PC-9 (cell line): ENCODE measurements at regions of chr19 and their contacts with region 1.

Region 1: GRCh38 chr19:48530066-48530720 is 18.6 kb upstream of the LMTK3 start:
- DNase-seq: no peak
- H3K4me3 ChIP-seq: no peak overlapping the region
- H3K27ac ChIP-seq: no peak overlapping the region
- H3K4me1 ChIP-seq: no peaks in the 10 kb centered on the region
- H3K27me3 ChIP-seq: no peaks in the 10 kb centered on the region
- CTCF ChIP-seq: no peak

Region 2: GRCh38 chr19:47860602-47861297 is 669.4 kb before region 1 on chr19:
- CTCF ChIA-PET with region 1: no interaction called
- POLR2A ChIA-PET with region 1: no interaction called
- intact Hi-C with region 1: no loop called
- DNase-seq: no peak
- H3K4me3 ChIP-seq: no peak overlapping the region
- H3K27ac ChIP-seq: no peak overlapping the region
- H3K4me1 ChIP-seq: 0 out of 2 replicates have a peak, but pooled peaks cover 8% of the 10 kb centered on the region
- H3K27me3 ChIP-seq: peaks cover 29% of the 10 kb centered on the region
- CTCF ChIP-seq: no peak

Region 3: GRCh38 chr19:48543121-48544056 is 13.2 kb after region 1 on chr19:
- CTCF ChIA-PET with region 1: no interaction called
- POLR2A ChIA-PET with region 1: no interaction called
- intact Hi-C with region 1: no loop called
- DNase-seq: peak; percentile 96
- H3K4me3 ChIP-seq: peak overlapping the region; percentile 34; the same call in 1 of the 2 replicates
- H3K27ac ChIP-seq: peak overlapping the region; percentile 58
- H3K4me1 ChIP-seq: peaks cover 24% of the 10 kb centered on the region
- H3K27me3 ChIP-seq: no peaks in the 10 kb centered on the region
- CTCF ChIP-seq: no peak

Region 4: GRCh38 chr19:48826606-48827020 is 296.4 kb after region 1 on chr19:
- CTCF ChIA-PET with region 1: no interaction called
- POLR2A ChIA-PET with region 1: interaction called, 30 read pairs
- intact Hi-C with region 1: no loop called
- DNase-seq: no peak
- H3K4me3 ChIP-seq: no peak overlapping the region
- H3K27ac ChIP-seq: no peak overlapping the region
- H3K4me1 ChIP-seq: peaks cover 6% of the 10 kb centered on the region; the same call in 1 of the 2 replicates
- H3K27me3 ChIP-seq: no peaks in the 10 kb centered on the region
- CTCF ChIP-seq: peak; percentile 59; the same call in 1 of the 2 replicates